Heart left ventricle (tissue), 16 donors: ENCODE measurements at regions of chr1 and their contacts with region 1.

Region 1: GRCh38 chr1:175154629-175155472 is 37.7 kb downstream of the KIAA0040 start:
- DNase-seq: peak; percentile 57 to 85 (median 72)
- ATAC-seq: peak; percentile 27 to 66 (median 56)
- H3K4me3 ChIP-seq: no peak overlapping the region
- H3K27ac ChIP-seq: no peak overlapping the region
- H3K4me1 ChIP-seq: peaks cover 0 to 18% (median 4%) of the 10 kb centered on the region in 12 donors
- H3K27me3 ChIP-seq: peaks cover 0 to 6% (median 0%) of the 10 kb centered on the region in 9 donors
- CTCF ChIP-seq: peak; percentile 88 to 95 (median 92)
- POLR2A ChIP-seq: no peak

Region 2: GRCh38 chr1:175221666-175222175 is 66.9 kb after region 1 on chr1:
- intact Hi-C with region 1: loop called in 9 of 10 experiments (anchors 1 to 5 kb)
- DNase-seq: peak in 4 of 5 donors; percentile 48 to 56 (median 51)
- ATAC-seq: peak in 3 of 4 donors; percentile 57 to 71 (median 70)
- H3K4me3 ChIP-seq: no peak overlapping the region
- H3K27ac ChIP-seq: peak overlapping the region in 9 of 12 donors; percentile 8 to 65 (median 31)
- H3K4me1 ChIP-seq: peaks cover 0 to 39% (median 17%) of the 10 kb centered on the region in 12 donors
- H3K27me3 ChIP-seq: no peaks in the 10 kb centered on the region
- CTCF ChIP-seq: peak in 10 of 12 donors; percentile 16 to 48 (median 34)
- POLR2A ChIP-seq: no peak

Region 3: GRCh38 chr1:175742790-175743459 is 588.1 kb after region 1 on chr1:
- intact Hi-C with region 1: loop called in 1 of 10 experiments (anchors 10 kb)
- DNase-seq: no peak
- ATAC-seq: peak; percentile 37 to 79 (median 51)
- H3K4me3 ChIP-seq: no peak overlapping the region
- H3K27ac ChIP-seq: no peak overlapping the region
- H3K4me1 ChIP-seq: peaks cover 0 to 5% (median 0%) of the 10 kb centered on the region in 12 donors
- H3K27me3 ChIP-seq: peaks cover 0 to 22% (median 4%) of the 10 kb centered on the region in 9 donors
- CTCF ChIP-seq: no peak
- POLR2A ChIP-seq: no peak

Region 4: DNA sequence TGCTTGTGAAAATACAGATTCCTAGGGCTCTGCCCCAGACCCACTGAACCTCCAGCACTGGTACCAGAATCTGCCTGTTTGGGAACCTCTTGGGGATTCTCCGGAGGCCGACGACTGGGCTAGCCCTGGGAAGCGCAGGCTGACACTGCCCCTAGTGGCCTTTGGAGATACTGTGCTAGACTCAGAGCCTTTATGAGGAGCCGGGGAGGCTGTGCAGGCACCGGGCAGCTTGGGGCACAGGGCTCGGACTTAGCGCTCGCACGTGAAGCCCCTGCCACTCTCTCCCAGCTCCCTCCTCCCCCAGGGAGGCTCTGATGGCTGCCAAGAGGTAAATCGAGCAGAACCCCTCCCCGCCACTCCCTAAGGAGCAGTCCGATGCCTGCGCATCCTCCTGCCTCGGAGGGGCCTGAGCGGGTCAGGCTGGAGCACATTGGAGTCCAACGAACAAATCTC is 733.2 kb after region 1 on chr1:
- intact Hi-C with region 1: loop called in 4 of 10 experiments (anchors 5 to 10 kb)
- DNase-seq: peak; percentile 45 to 68 (median 56)
- ATAC-seq: peak; percentile 82 to 97 (median 92)
- H3K4me3 ChIP-seq: no peak overlapping the region
- H3K27ac ChIP-seq: no peak overlapping the region
- H3K4me1 ChIP-seq: peaks cover 0 to 10% (median 0%) of the 10 kb centered on the region in 12 donors
- H3K27me3 ChIP-seq: no peaks in the 10 kb centered on the region
- CTCF ChIP-seq: peak; percentile 64 to 88 (median 78)
- POLR2A ChIP-seq: no peak

Region 5: GRCh38 chr1:176843352-176844297 is 1688.8 kb after region 1 on chr1:
- intact Hi-C with region 1: loop called in 5 of 10 experiments (anchors 5 to 10 kb)
- DNase-seq: peak in 3 of 5 donors; percentile 22 to 38 (median 33)
- ATAC-seq: peak; percentile 19 to 55 (median 40)
- H3K4me3 ChIP-seq: no peak overlapping the region
- H3K27ac ChIP-seq: no peak overlapping the region
- H3K4me1 ChIP-seq: peaks cover 0 to 25% (median 2%) of the 10 kb centered on the region in 12 donors
- H3K27me3 ChIP-seq: no peaks in the 10 kb centered on the region
- CTCF ChIP-seq: peak; percentile 42 to 77 (median 61)
- POLR2A ChIP-seq: no peak